HEK293 (cell line): ENCODE measurements at regions of chr11 and their contacts with region 1.

Region 1: GRCh38 chr11:12235947-12236743 is 125.8 kb downstream of the MICAL2 start:
- H3K4me3 ChIP-seq: no peak overlapping the region
- H3K27ac ChIP-seq: no peak overlapping the region
- H3K4me1 ChIP-seq: no peaks in the 10 kb centered on the region
- CTCF ChIP-seq: no peak

Region 2: GRCh38 chr11:12050470-12051286 is 185.5 kb before region 1 on chr11:
- CTCF ChIA-PET with region 1: interaction called, 79 read pairs
- POLR2A ChIA-PET with region 1: no interaction called
- H3K4me3 ChIP-seq: no peak overlapping the region
- H3K27ac ChIP-seq: no peak overlapping the region
- H3K4me1 ChIP-seq: no peaks in the 10 kb centered on the region
- CTCF ChIP-seq: no peak

Region 3: DNA sequence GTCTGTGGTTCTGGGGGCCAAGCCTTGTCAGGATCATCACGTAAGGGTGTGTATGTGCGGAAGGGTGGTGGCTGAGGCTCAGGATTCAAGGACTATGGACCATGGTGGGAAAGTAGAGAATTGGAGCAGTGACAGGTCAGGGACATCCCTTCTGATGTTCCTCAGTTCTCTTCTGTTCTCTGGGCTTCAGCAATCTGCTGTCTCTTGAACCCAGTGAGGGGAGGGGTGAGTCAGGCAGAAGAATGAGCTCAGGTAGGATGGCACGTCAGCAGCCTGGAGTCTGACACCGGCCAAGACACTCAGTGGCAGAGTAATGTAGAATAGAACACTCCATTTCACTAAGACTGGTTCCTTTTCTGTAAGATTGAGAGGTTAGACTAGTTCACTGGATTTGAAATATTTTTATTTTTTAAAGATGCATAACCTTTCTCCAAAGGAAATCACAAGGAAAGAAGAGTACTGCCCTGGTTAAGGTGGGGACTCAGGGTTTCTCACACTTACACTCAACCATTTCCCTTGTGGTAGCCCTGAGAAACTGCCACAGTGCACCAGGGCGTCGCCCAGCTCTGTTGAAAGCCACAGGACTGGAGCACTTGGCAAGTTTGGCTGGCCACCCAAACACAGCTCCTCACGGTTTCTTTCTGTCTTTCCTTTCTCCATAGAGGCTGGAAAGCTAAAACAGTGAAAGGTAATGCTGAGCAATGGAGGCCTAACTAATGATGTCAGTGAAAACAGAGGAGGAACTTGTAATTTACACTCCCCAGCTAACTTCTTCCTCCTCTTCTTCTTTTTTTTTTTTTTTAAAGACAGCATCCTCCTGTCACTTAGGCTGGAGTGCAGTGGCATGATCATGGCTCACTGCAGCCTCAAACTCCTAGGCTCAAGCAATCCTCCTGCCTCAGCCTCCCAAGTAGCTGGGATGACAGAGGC is 148.8 kb before region 1 on chr11:
- CTCF ChIA-PET with region 1: interaction called, 19 read pairs
- POLR2A ChIA-PET with region 1: no interaction called
- H3K4me3 ChIP-seq: no peak overlapping the region
- H3K27ac ChIP-seq: no peak overlapping the region
- H3K4me1 ChIP-seq: no peaks in the 10 kb centered on the region
- CTCF ChIP-seq: no peak

Region 4: DNA sequence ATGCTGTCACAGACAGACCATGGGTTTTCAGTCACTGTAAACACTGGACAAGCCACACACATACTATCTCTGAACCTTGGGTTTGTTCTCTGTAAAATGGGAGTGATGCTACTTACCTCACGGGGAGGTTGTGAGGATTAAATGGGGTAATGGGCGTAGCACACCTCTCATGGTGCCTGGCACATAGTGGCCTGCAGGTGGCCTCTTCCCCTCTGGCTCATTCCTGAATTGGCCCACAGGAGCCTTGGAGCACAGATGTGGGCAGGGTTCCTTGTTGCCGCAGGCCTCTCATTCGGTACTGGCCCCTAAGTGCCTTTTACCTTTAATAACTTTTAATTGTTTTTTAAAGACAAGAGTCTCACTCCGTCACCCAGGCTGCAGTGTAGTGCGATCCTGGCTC is 114.1 kb before region 1 on chr11:
- CTCF ChIA-PET with region 1: interaction called, 35 read pairs
- POLR2A ChIA-PET with region 1: no interaction called
- H3K4me3 ChIP-seq: no peak overlapping the region
- H3K27ac ChIP-seq: no peak overlapping the region
- H3K4me1 ChIP-seq: no peaks in the 10 kb centered on the region
- CTCF ChIP-seq: no peak

Region 5: DNA sequence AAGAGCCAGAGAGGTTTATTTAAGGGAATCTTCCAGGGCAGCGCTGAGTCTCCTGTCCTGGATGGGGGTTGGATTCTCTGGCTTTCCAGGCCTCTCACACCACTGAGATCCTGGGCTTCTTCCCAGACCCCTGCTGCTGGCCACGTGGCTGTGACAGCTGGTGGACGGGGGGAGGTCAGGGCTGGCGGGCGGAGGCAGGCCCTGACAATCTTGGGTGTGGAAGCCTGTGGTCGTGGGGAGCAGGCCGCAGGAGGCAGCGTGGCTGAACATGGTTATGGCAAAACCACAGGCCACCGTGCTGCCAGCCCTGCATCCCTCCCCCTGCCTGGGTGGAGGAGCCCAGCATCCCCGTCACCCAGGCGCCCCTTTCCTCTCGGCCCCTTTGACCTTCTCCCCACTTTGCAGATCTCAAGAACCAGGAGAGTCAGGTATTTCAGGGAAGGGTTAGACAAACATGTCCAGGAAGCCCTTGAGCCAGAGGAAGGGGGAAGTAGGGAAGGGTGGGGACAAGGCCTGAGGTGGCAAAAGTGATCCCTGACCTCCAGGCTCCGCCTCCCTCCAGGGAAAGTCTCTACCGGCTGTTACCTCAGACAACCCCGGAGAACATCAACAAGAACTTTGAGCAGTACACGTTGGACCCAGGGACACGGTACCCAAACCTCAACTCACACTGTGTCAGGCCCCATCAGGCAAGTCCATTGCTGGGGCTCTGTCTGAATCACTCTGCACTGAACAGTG is 13.9 kb before region 1 on chr11:
- CTCF ChIA-PET with region 1: interaction called, 12 read pairs
- POLR2A ChIA-PET with region 1: no interaction called
- H3K4me3 ChIP-seq: no peak overlapping the region
- H3K27ac ChIP-seq: no peak overlapping the region
- H3K4me1 ChIP-seq: no peaks in the 10 kb centered on the region; the same call in 1 of the 2 replicates
- CTCF ChIP-seq: no peak

Region 6: GRCh38 chr11:12248338-12248737 is 12.2 kb after region 1 on chr11:
- CTCF ChIA-PET with region 1: interaction called, 18 read pairs
- POLR2A ChIA-PET with region 1: no interaction called
- H3K4me3 ChIP-seq: no peak overlapping the region
- H3K27ac ChIP-seq: no peak overlapping the region
- H3K4me1 ChIP-seq: no peaks in the 10 kb centered on the region
- CTCF ChIP-seq: no peak

Region 7: DNA sequence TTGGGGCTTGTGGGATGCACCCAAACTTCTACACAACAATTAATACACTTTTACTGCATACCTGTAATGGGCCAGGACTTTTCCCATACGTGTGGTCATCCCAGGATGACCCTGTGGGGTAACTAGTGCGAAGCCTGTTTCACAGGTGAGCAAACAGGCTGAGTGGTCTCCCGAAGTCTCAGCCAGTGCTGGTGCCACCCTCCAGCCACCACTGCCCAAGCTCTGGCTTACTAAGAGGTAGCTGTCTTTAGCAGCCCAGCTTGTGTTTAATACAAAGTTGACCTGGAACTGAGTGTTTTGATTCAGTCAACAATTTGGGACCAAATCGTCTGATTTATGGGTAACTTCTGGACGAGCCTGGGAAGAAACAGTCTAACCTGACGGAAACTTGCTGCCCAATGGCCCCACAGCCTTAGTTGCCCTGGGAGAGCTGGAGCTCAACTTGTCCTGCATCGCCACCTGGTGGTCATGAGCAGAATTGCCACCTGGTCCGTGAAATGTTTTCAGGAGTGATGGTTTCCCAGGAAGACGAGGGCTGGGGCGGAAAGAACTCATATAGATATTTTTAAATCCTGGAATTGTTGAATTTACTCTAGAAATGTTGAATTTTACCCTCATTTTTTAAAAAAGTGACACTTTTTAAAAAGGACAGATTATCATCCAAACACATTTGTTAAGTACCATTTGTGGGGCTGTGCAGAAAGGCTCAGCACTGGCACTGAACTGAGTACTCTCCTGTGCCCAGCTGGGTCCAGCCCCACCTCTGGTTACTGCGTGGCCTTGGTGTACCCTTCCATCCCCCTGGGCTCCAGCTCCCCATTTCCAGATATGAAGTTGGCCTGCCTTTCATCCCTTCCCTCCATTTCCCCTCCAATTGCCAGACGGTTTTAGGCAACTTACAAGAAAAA is 45.7 kb after region 1 on chr11:
- CTCF ChIA-PET with region 1: interaction called, 27 read pairs
- POLR2A ChIA-PET with region 1: no interaction called
- H3K4me3 ChIP-seq: no peak overlapping the region
- H3K27ac ChIP-seq: no peak overlapping the region
- H3K4me1 ChIP-seq: no peaks in the 10 kb centered on the region
- CTCF ChIP-seq: peak; percentile 65